ENCODE measurements at regions of chr3 and their contacts with region 1.

Region 1: DNA sequence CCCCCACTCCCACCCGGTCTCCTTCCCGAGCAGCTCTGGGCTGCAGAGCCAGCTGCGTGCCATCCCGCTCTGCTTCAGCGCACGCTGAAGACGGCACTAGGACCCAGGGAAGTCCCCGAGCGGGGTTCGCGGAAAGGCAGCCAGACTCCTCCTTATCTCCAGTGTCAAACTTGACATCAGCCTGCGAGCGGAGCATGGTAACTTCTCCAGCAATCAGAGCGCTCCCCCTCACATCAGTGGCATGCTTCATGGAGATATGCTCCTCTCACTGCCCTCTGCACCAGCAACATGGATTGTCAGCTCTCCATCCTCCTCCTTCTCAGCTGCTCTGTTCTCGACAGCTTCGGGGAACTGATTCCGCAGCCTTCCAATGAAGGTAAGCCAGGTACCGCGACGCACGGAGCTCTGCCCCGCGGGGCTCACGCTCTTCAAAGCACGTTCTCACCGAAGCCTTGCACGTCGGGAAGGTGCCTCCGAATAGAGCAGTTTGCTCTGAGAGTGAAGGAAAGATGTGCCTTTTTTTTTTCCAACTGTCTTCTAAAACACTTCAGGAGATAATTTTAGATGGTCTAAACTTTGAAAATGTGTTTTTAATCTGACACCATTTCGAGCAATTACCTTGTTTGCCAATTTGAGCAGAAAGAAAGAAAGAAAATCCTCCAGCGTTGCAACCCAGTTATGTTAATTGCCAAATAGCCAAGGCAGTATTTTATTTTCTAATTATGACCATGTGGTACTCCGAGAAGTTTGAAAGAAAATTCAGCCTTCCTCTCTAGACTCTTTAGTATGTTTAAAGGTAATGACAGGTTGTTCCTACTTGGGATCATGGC is at the start of gene EPHA3:
- DNase-seq: peak; percentile 54 to 56
- H3K4me3 ChIP-seq: peak within 1 kb of the TSS; percentile 18
- H3K4me3 Mint-ChIP-seq: peak within 1 kb of the TSS; percentile 78
- H3K27ac Mint-ChIP-seq: no peak within 1 kb of the TSS
- H3K4me1 ChIP-seq: no peaks in the 10 kb centered on the region
- H3K4me1 Mint-ChIP-seq: peaks cover 7% of the 10 kb centered on the region
- H3K27me3 ChIP-seq: no peaks in the 10 kb centered on the region; the same call in 1 of the 2 replicates
- H3K27me3 Mint-ChIP-seq: peaks cover 17% of the 10 kb centered on the region
- CTCF ChIP-seq: no peak
- total RNA-seq, gene EPHA3: not detected in 2 replicates

Region 2: GRCh38 chr3:88211096-88211890 is 896.4 kb before region 1 on chr3:
- CTCF ChIA-PET with region 1: no interaction called
- POLR2A ChIA-PET with region 1: no interaction called
- intact Hi-C with region 1: loop called (anchors 2 kb)
- DNase-seq: no peak
- H3K4me3 ChIP-seq: no peak overlapping the region
- H3K4me3 Mint-ChIP-seq: no peak overlapping the region
- H3K27ac Mint-ChIP-seq: no peak overlapping the region
- H3K4me1 ChIP-seq: no peaks in the 10 kb centered on the region
- H3K4me1 Mint-ChIP-seq: no peaks in the 10 kb centered on the region
- H3K27me3 ChIP-seq: no peaks in the 10 kb centered on the region
- H3K27me3 Mint-ChIP-seq: peaks cover 9% of the 10 kb centered on the region
- CTCF ChIP-seq: no peak